HepG2 (cell line): ENCODE measurements at regions of chr4 and their contacts with region 1.

Region 1: GRCh38 chr4:174764105-174764729 is 64.8 kb downstream of the GLRA3 start:
- DNase-seq: peak; percentile 29
- ATAC-seq: peak; percentile 71
- H3K4me3 ChIP-seq: no peak overlapping the region
- H3K27ac ChIP-seq: no peak overlapping the region
- H3K4me1 ChIP-seq: no peaks in the 10 kb centered on the region
- H3K27me3 ChIP-seq: no peaks in the 10 kb centered on the region
- CTCF ChIP-seq: peak; percentile 56
- EP300 ChIP-seq: no peak
- POLR2A ChIP-seq: no peak
- RAD21 ChIP-seq: no peak

Region 2: DNA sequence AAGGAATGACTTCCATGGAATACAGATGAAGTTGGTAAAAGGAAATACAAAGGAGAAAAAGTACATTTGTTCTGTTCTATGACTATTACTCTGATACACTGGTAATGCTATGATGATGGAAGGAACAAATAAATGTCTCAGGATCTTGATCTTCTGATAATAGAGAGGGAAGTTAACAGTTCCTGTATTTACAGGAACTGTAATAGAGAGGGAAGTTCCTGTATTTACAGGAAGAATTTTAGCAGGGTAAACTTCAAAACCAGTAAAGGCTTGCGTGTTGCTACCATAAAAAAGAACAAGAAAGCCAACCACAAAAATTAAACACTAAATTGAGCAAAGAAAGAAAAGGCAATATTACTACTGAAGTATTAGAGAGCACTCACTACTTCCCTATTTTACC is 150.2 kb before region 1 on chr4:
- CTCF ChIA-PET with region 1: no interaction called
- POLR2A ChIA-PET with region 1: no interaction called
- in situ Hi-C with region 1: no loop called
- intact Hi-C with region 1: no loop called
- DNase-seq: no peak
- ATAC-seq: no peak
- H3K4me3 ChIP-seq: no peak overlapping the region
- H3K27ac ChIP-seq: no peak overlapping the region
- H3K4me1 ChIP-seq: no peaks in the 10 kb centered on the region
- H3K27me3 ChIP-seq: no peaks in the 10 kb centered on the region
- CTCF ChIP-seq: no peak
- EP300 ChIP-seq: no peak
- POLR2A ChIP-seq: no peak
- RAD21 ChIP-seq: no peak

Region 3: DNA sequence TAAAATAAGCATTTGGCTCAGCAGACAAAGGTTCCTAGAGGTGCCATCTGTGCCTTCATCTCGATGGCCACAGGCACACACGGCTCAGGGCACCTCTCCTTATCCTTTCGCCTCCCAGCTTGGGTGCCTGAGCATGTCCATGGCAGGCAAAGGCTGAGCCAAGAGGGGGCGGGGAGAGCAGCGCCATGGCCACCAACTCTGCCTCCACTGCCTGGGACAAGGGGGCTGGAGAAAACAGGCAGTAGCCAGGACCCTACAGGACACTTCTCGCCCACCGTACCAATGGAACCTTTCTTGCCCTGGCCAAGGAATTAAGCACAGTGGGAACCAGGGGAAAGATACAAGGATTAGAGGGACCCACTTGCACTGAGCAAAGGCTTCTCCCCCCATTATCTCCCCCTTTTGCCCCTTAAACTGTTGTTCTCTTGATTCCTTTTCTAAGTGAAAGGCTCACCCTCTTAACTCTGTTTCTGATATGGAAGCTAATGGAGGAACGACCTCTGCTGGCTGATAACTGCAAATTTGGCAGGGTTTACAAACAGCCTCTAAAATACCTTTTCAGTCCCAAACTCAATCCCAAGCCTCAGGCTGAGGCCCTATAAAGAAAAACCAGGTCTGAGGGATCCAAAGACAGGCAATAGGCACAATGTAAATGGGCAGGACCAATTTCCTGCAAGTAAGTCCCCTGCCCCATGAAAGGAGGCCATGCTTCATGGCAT is 489.1 kb after region 1 on chr4:
- CTCF ChIA-PET with region 1: no interaction called
- POLR2A ChIA-PET with region 1: no interaction called
- in situ Hi-C with region 1: no loop called
- intact Hi-C with region 1: loop called (anchors 2 kb)
- DNase-seq: no peak
- ATAC-seq: no peak
- H3K4me3 ChIP-seq: no peak overlapping the region
- H3K27ac ChIP-seq: no peak overlapping the region
- H3K4me1 ChIP-seq: no peaks in the 10 kb centered on the region
- H3K27me3 ChIP-seq: no peaks in the 10 kb centered on the region
- CTCF ChIP-seq: no peak
- EP300 ChIP-seq: no peak
- POLR2A ChIP-seq: no peak
- RAD21 ChIP-seq: no peak

Region 4: DNA sequence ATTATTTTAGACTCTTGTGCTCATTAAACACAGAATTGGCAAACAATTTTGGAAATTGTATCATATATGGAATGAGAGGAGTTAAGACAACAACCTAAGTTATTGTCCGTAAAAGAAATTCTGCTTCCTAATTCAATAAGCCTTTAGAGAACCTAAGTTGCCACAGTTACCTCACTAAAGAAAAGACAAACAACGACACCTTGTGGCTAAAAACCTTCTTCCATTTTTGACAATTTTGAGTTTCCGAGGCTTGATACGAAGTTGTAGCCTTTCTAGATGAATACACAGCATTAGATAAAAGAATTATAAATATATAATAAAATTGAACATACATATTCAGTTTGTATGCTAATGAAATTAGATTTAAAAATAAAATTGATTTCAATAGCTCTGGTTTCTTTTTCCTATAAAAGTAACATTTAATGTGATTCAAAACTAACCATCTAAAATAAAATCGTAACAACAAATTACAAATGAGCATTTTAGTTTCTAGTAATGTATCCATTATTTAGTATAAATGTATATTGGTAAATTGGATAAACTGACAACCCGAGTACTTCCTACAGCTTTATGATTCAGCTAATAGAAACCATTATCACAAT is 772.7 kb after region 1 on chr4:
- CTCF ChIA-PET with region 1: interaction called, 18 read pairs
- POLR2A ChIA-PET with region 1: no interaction called
- in situ Hi-C with region 1: loop called (anchors 10 kb)
- intact Hi-C with region 1: no loop called
- DNase-seq: peak; percentile 35
- ATAC-seq: no peak; the same call in 2 of the 3 replicates
- H3K4me3 ChIP-seq: no peak overlapping the region
- H3K27ac ChIP-seq: no peak overlapping the region
- H3K4me1 ChIP-seq: peaks cover 9% of the 10 kb centered on the region
- H3K27me3 ChIP-seq: no peaks in the 10 kb centered on the region
- CTCF ChIP-seq: peak; percentile 59
- EP300 ChIP-seq: no peak
- POLR2A ChIP-seq: no peak
- RAD21 ChIP-seq: no peak; the same call in 1 of the 2 replicates